Esophagus muscularis mucosa (tissue), 4 donors: ENCODE measurements at regions of chrX and their contacts with region 1.

Region 1: GRCh38 chrX:49199906-49200771 is at the start of gene SYP:
- DNase-seq: peak; percentile 95
- H3K4me3 ChIP-seq: peak within 1 kb of the TSS; percentile 38 to 48 (median 42)
- H3K27ac ChIP-seq: peak within 1 kb of the TSS; percentile 35 to 78 (median 61)
- H3K4me1 ChIP-seq: peaks cover 4 to 16% (median 13%) of the 10 kb centered on the region in 4 donors
- H3K27me3 ChIP-seq: no peaks in the 10 kb centered on the region
- CTCF ChIP-seq: peak in 1 of 3 experiments; percentile 14
- EP300 ChIP-seq: no peak
- POLR2A ChIP-seq: peak; percentile 42
- total RNA-seq, gene SYP: 4.5 to 12.0 (median 6.1) TPM

Region 2: DNA sequence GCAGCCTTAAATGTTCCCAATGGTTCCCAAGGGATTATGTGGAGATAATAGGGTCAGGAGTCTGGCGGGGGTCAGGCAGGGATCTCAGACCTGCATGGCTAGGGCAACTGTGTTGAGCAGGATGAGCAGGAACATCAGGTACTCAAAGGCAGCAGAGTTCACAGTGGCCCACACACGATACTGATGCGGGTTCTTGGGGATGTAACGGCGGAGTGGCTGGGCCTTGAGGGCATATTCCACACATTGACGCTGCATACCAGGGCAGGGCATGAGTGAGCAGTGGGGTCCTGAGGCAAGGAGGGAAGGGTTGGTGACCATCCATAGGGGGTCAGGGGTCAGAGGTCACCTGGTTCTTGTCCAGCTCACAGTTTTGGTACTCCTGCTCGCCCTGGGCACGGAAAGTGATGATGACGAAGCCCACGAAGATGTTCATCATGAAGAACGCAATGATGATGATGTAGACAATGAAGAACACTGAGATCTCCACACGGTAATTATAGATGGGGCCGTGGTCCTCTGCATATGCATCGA is 14.9 kb after region 1 on chrX:
- intact Hi-C with region 1: no loop called
- DNase-seq: no peak
- H3K4me3 ChIP-seq: no peak overlapping the region
- H3K27ac ChIP-seq: no peak overlapping the region
- H3K4me1 ChIP-seq: no peaks in the 10 kb centered on the region
- H3K27me3 ChIP-seq: peaks cover 0 to 8% (median 0%) of the 10 kb centered on the region in 4 donors
- CTCF ChIP-seq: no peak
- EP300 ChIP-seq: no peak
- POLR2A ChIP-seq: no peak

Region 3: GRCh38 chrX:49237060-49237459 is 36.9 kb after region 1 on chrX:
- intact Hi-C with region 1: loop called (anchors 5 kb)
- DNase-seq: no peak
- H3K4me3 ChIP-seq: no peak overlapping the region
- H3K27ac ChIP-seq: no peak overlapping the region
- H3K4me1 ChIP-seq: peaks cover 0 to 16% (median 12%) of the 10 kb centered on the region in 4 donors
- H3K27me3 ChIP-seq: peaks cover 0 to 5% (median 0%) of the 10 kb centered on the region in 4 donors
- CTCF ChIP-seq: no peak
- EP300 ChIP-seq: no peak
- POLR2A ChIP-seq: no peak